AG04449 (cell line): ENCODE measurements at regions of chr4 and their contacts with region 1.

Region 1: DNA sequence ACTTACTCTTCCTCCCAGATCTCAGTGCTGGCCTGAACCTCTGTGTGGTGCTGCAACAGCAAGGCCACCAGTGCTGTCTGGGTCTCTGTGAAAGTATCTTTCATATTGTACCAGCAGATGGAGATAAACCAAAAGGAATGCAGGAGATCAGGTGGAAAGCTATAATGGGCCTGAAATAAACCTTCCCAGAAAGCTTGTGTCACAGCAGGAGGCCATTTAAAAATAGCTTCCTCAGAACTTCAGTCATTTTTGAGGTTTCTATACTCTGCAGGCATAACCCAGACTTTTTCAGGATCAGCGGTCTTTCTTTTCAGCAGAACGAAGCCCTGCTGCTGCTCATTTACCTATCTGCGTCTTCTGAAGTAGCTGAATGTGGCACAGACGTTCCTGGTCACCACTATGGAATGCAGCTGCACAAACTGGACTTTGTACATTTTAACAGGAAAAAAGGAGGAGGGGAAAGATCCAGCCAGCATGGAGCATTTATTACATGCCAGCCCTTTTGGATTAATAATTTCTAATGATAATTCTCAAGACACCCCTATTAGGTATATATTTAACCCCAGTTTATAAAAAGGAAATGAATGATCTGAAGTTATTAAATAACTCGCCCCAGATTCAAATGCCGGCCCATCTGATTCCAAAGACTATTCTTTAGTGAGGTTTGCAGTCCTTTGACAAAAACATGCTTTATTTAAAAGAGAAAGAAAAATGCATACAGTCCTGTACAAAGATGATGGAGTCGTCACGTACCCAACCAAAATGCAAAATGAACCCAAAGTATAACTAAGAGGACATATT is 119.7 kb downstream of the NFKB1 start:
- DNase-seq: peak; percentile 66
- H3K4me3 ChIP-seq: peak overlapping the region; percentile 44
- CTCF ChIP-seq: peak; percentile 52

Region 2: GRCh38 chr4:102632241-102633065 is 11.6 kb after region 1 on chr4:
- CTCF ChIA-PET with region 1: interaction called, 11 read pairs
- POLR2A ChIA-PET with region 1: no interaction called
- DNase-seq: no peak
- H3K4me3 ChIP-seq: no peak overlapping the region
- CTCF ChIP-seq: no peak

Region 3: GRCh38 chr4:102826890-102827673 is 206.2 kb after region 1 on chr4 and contains the start of gene UBE2D3:
- CTCF ChIA-PET with region 1: interaction called, 38 read pairs
- POLR2A ChIA-PET with region 1: interaction called, 37 read pairs
- DNase-seq: peak; percentile 84
- H3K4me3 ChIP-seq: peak within 1 kb of the TSS; percentile 86
- CTCF ChIP-seq: no peak

Region 4: GRCh38 chr4:103091601-103092223 is 470.8 kb after region 1 on chr4:
- CTCF ChIA-PET with region 1: interaction called, 27 read pairs
- POLR2A ChIA-PET with region 1: no interaction called
- DNase-seq: no peak
- H3K4me3 ChIP-seq: no peak overlapping the region
- CTCF ChIP-seq: peak; percentile 41